BJ (cell line): ENCODE measurements at regions of chr11 and their contacts with region 1.

Region 1: DNA sequence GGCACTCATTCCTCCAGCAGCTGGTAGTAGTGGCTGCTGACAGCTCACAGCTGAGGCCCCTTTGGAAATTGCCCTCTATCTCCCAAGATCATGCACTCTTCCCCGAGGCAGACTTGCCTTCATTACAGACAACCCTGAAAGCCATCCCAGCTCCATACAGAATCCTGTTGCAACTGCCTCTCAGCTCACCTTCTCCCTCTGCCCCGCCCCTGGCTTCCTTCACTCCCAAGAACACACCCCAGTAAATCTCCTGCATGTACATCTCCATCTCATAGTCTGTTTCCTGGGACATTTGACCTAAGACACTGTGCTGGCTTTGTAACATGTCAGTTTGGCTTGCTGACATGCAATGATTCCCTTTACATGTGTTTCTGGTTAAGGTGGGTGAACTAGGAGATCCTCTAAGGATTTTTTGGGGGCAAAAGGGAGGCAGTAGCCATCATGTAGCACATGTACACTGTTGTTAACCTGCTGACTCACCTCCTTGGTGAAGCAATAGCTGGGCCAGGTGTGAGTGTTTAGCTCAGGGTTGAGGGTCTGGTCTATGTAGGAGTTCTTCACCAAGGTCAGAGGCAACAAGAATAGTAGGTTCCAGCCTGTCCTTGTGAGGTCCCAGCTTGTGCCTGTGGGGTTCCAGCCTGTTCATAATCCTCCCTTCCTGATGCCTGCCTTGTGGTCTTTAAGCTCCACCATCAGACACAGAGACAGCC is 179.6 kb downstream of the CSNK2A3 start:
- DNase-seq: no peak
- H3K4me3 ChIP-seq: no peak overlapping the region
- H3K27me3 ChIP-seq: no peaks in the 10 kb centered on the region; the same call in none of the 2 replicates
- CTCF ChIP-seq: no peak

Region 2: DNA sequence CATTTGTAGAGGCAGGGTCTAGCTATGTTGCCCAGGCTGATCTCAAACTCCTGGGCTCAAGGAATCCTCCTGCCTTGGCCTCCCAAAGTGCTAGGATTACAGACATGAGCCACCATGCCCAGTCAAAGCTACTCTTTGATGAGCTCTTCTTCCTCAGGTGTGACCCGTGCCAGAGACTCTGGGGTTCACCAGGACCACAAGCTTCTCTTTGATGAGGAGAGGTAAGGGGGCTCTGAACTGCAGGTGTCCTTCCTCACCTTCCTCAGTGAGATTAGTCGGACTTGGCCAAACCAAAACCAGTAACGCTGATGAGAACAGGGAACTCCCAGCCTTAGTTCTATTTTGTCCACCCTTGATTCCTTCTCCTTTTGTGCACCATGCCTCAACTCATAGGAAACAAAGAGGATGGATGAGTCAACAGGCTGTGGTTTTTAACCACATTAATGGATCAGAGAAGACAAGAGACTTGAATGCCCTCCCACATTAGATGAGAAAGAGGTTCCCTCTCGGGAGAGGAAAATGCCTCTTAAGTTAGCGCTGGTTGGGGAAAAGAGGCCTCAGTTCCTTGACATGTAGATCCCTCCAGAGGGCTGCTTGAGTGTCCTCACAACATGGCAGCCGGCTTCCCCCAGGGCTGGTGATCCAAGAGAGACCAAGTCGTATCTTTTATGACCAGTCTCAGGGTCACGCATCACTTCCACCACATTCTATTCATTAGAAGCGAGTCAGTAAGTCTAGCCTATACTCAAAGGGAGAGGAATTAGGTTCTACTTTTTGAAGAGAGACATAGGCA is 448.2 kb before region 1 on chr11:
- CTCF ChIA-PET with region 1: no interaction called
- POLR2A ChIA-PET with region 1: no interaction called
- DNase-seq: peak; percentile 32
- H3K4me3 ChIP-seq: no peak overlapping the region
- H3K27me3 ChIP-seq: no peaks in the 10 kb centered on the region
- CTCF ChIP-seq: no peak

Region 3: DNA sequence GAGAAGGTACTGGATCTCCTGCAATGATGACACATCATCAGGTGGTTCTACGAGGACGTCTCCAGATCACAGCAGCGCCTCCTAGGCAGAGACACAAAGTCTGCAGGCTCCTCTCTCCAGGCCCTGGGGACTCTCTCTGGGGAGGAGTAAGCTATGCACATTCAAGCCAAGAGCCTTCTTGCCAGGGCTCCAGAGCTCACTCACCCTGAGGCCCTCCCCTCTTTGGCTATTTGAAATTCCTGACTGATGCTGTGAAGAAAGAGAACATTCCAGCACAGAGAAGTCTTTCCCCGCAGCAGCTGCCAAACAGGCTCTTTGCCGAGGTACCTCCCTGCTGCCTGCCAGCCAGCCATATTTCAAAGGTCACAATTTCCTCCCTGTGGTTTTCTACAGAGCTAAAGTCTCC is 25.4 kb before region 1 on chr11:
- CTCF ChIA-PET with region 1: interaction called, 10 read pairs
- POLR2A ChIA-PET with region 1: no interaction called
- DNase-seq: peak; percentile 71
- H3K4me3 ChIP-seq: no peak overlapping the region
- H3K27me3 ChIP-seq: no peaks in the 10 kb centered on the region; the same call in 1 of the 2 replicates
- CTCF ChIP-seq: peak; percentile 57

Region 4: DNA sequence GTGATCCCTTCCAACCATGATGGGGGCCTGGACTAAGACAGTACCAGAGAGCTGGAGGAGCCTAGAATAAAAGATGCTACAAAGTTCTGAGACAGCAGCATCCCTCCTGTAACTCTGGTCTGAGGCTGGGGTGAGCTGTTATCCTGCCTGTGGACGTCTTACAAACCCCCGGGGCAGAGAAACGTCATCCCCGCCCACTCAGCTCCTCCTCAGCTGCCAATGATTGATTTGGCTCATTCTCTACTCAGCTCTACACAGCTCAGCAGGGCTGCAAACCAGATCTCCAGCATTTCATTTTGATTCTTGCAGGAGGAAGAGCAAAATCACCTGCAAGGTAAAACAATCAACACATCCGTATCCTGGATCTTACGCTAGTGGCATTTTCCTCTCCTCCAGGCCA is 124.1 kb after region 1 on chr11:
- CTCF ChIA-PET with region 1: no interaction called
- POLR2A ChIA-PET with region 1: no interaction called
- DNase-seq: no peak
- H3K4me3 ChIP-seq: no peak overlapping the region
- H3K27me3 ChIP-seq: no peaks in the 10 kb centered on the region
- CTCF ChIP-seq: no peak